Sigmoid colon (tissue), 7 donors: ENCODE measurements at regions of chr14 and their contacts with region 1.

Region 1: DNA sequence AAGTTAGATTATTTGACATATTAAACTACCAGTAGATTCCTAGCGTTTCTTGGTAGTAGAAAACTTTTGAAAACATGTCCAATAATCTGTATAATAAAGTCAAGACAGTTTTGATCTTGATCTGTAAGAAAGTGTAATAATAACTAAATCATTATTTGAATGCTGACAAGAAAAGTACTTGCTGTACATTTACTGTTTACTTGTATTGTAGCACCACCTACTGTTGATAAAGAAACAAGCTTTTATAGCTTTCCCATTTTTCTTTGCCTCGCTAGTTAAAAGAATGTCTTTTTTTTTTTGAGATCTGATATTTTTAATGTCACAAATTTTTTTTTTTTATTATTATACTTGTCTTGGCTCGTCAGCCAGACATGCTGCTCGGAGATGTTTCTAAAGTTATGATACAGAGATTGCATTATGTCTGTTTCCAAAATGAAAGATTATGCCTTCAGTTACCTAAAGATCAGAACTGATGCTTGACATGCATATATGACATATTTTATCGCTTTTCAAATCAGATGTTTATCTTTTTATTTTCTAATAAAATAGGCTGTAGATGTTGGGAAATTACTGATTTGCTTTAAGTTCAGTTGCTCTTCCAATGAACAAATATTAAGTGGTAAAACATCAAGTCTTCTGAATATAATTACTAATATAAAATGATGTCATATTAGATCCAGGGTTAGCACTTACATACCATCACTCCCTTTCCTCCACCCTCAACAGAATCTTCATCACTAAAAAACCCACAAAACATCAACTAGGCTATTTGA is 140.5 kb downstream of the AKAP6 start:
- DNase-seq: no peak
- H3K4me3 ChIP-seq: no peak overlapping the region
- H3K27ac ChIP-seq: peak overlapping the region; percentile 70 to 82 (median 72)
- H3K4me1 ChIP-seq: peaks cover 0 to 75% (median 51%) of the 10 kb centered on the region in 4 donors
- H3K27me3 ChIP-seq: no peaks in the 10 kb centered on the region
- CTCF ChIP-seq: peak in 3 of 4 experiments; percentile 31 to 51 (median 43)
- EP300 ChIP-seq: no peak
- POLR2A ChIP-seq: no peak

Region 2: GRCh38 chr14:31510222-31510621 is 959.4 kb before region 1 on chr14:
- intact Hi-C with region 1: loop called (anchors 10 kb)
- DNase-seq: no peak
- H3K4me3 ChIP-seq: no peak overlapping the region
- H3K27ac ChIP-seq: no peak overlapping the region
- H3K4me1 ChIP-seq: peaks cover 0 to 18% (median 12%) of the 10 kb centered on the region in 4 donors
- H3K27me3 ChIP-seq: no peaks in the 10 kb centered on the region
- CTCF ChIP-seq: peak; percentile 18 to 64 (median 54)
- EP300 ChIP-seq: no peak
- POLR2A ChIP-seq: no peak

Region 3: GRCh38 chr14:32202998-32203882 is 266.3 kb before region 1 on chr14 and contains the start of gene RNU6-8:
- intact Hi-C with region 1: loop called (anchors 5 kb)
- DNase-seq: peak; percentile 95
- H3K4me3 ChIP-seq: peak within 1 kb of the TSS; percentile 64 to 68 (median 65)
- H3K27ac ChIP-seq: peak within 1 kb of the TSS; percentile 78 to 87 (median 84)
- H3K4me1 ChIP-seq: peaks cover 0 to 12% (median 9%) of the 10 kb centered on the region in 4 donors
- H3K27me3 ChIP-seq: no peaks in the 10 kb centered on the region
- CTCF ChIP-seq: no peak
- EP300 ChIP-seq: no peak
- POLR2A ChIP-seq: peak; percentile 43 to 58
- total RNA-seq, gene RNU6-8: not detected

Region 4: DNA sequence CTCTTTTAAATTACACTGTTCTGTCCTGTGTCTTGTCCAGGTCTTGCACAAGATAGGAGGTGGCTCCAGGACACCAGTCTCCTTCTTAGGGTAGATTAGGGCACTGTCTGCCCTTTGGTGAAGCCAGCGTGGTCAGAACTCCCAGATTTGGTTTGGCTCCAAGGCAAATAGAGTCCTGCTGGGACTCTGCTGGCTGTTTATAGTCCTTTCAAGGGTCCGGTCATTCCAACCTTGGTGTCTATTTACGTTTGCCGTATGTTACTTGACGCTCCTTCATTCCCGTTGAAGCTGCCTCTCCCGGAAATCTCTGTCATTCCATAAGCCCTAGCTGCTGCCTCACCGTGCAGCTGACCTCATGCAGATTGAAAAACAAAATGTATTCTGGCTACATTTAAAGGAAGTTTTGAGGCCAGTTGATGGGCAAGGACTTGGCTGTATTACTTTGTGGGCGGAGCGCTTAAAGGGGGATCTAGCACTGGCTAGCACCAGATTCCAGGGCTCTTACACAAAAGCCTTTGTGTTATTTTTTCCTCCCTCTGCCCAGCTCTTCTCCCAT is 40.1 kb after region 1 on chr14:
- intact Hi-C with region 1: loop called (anchors 5 kb)
- DNase-seq: peak; percentile 83
- H3K4me3 ChIP-seq: peak overlapping the region; percentile 4 to 19 (median 13)
- H3K27ac ChIP-seq: peak overlapping the region; percentile 75 to 88 (median 82)
- H3K4me1 ChIP-seq: peaks cover 0 to 51% (median 27%) of the 10 kb centered on the region in 4 donors
- H3K27me3 ChIP-seq: no peaks in the 10 kb centered on the region
- CTCF ChIP-seq: no peak
- EP300 ChIP-seq: peak in 3 of 4 donors; percentile 24 to 80 (median 78)
- POLR2A ChIP-seq: no peak

Region 5: GRCh38 chr14:32560209-32560857 is 90.8 kb after region 1 on chr14:
- intact Hi-C with region 1: loop called (anchors 5 kb)
- DNase-seq: peak; percentile 69
- H3K4me3 ChIP-seq: no peak overlapping the region
- H3K27ac ChIP-seq: peak overlapping the region; percentile 53 to 84 (median 74)
- H3K4me1 ChIP-seq: peaks cover 0 to 51% (median 43%) of the 10 kb centered on the region in 4 donors
- H3K27me3 ChIP-seq: no peaks in the 10 kb centered on the region
- CTCF ChIP-seq: peak; percentile 81 to 91 (median 90)
- EP300 ChIP-seq: no peak
- POLR2A ChIP-seq: no peak